Caco-2 (cell line): ENCODE measurements at regions of chrX and their contacts with region 1.

Region 1: GRCh38 chrX:47523297-47523696 is 37.7 kb upstream of the ARAF start:
- DNase-seq: peak; percentile 63 to 86
- H3K4me3 ChIP-seq: peak overlapping the region; percentile 52
- H3K4me3 Mint-ChIP-seq: peak overlapping the region; percentile 68
- H3K27ac Mint-ChIP-seq: no peak overlapping the region
- H3K4me1 ChIP-seq: no peaks in the 10 kb centered on the region
- H3K4me1 Mint-ChIP-seq: no peaks in the 10 kb centered on the region
- H3K27me3 ChIP-seq: no peaks in the 10 kb centered on the region
- H3K27me3 Mint-ChIP-seq: peaks cover 3% of the 10 kb centered on the region
- CTCF ChIP-seq: peak; percentile 71 to 75

Region 2: DNA sequence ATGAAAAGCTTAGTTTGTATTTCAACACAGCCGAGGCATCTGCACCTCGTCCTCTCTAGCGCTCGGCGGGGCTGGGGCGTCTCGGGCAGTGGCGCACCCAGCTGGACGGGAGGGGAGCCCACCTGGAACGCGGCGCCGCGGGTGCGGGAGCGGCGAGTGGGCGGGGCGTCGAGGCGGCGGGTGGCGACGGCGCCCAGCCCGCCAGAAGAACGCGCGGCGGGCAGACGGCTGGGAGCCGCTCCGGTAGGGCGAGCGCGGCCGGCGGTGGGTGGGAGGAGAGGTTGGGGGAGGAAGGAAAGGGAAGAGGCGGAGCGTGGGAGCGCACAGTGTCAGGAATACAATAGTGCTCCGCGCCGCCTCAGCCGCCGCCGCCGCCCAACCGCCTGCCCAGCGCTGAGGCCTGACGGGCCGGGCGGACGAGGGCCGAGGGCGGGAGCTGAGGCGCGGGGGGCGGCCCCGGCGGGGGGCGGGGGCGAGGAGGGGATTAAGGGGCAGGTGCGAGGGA is 611.1 kb before region 1 on chrX and contains the start of gene JADE3:
- CTCF ChIA-PET with region 1: no interaction called
- POLR2A ChIA-PET with region 1: no interaction called
- intact Hi-C with region 1: no loop called
- DNase-seq: peak; percentile 82 to 87
- H3K4me3 ChIP-seq: peak within 1 kb of the TSS; percentile 74
- H3K4me3 Mint-ChIP-seq: peak within 1 kb of the TSS; percentile 85
- H3K27ac Mint-ChIP-seq: peak within 1 kb of the TSS; percentile 85
- H3K4me1 ChIP-seq: no peaks in the 10 kb centered on the region
- H3K4me1 Mint-ChIP-seq: no peaks in the 10 kb centered on the region
- H3K27me3 ChIP-seq: no peaks in the 10 kb centered on the region
- H3K27me3 Mint-ChIP-seq: no peaks in the 10 kb centered on the region
- CTCF ChIP-seq: peak in 1 of 2 experiments; percentile 2
- total RNA-seq, gene JADE3: 21.7 and 22.7 TPM in 2 replicates

Region 3: GRCh38 chrX:47112316-47112954 is 410.9 kb before region 1 on chrX:
- CTCF ChIA-PET with region 1: interaction called, 11 read pairs
- POLR2A ChIA-PET with region 1: no interaction called
- intact Hi-C with region 1: no loop called
- DNase-seq: no peak
- H3K4me3 ChIP-seq: no peak overlapping the region
- H3K4me3 Mint-ChIP-seq: no peak overlapping the region
- H3K27ac Mint-ChIP-seq: no peak overlapping the region
- H3K4me1 ChIP-seq: no peaks in the 10 kb centered on the region
- H3K4me1 Mint-ChIP-seq: no peaks in the 10 kb centered on the region
- H3K27me3 ChIP-seq: no peaks in the 10 kb centered on the region
- H3K27me3 Mint-ChIP-seq: no peaks in the 10 kb centered on the region
- CTCF ChIP-seq: no peak

Region 4: GRCh38 chrX:47384502-47384901 is 138.8 kb before region 1 on chrX:
- CTCF ChIA-PET with region 1: no interaction called
- POLR2A ChIA-PET with region 1: no interaction called
- intact Hi-C with region 1: loop called (anchors 5 kb)
- DNase-seq: peak; percentile 40 to 59
- H3K4me3 ChIP-seq: no peak overlapping the region
- H3K4me3 Mint-ChIP-seq: no peak overlapping the region
- H3K27ac Mint-ChIP-seq: no peak overlapping the region
- H3K4me1 ChIP-seq: no peaks in the 10 kb centered on the region
- H3K4me1 Mint-ChIP-seq: no peaks in the 10 kb centered on the region
- H3K27me3 ChIP-seq: no peaks in the 10 kb centered on the region
- H3K27me3 Mint-ChIP-seq: no peaks in the 10 kb centered on the region
- CTCF ChIP-seq: peak; percentile 48 to 56

Region 5: DNA sequence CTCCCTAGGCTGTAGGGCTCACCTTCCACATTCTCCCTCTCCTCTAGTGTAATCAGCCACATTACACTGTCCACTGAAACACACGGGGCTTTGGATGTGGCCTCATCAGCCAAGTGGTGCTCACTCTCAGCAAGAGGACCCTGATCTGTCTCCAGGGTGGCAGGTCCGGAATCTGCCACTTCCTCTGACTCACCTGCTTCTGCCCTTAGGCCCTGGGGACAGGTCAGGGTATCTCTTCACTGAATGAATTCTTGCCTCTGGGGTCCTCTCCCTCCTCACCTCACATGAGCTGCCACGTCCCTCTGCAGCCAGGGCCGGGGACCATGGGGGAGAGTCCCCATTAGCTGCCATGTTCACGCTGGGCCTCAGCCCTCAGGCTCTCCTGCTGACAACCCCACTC is 56.2 kb before region 1 on chrX:
- CTCF ChIA-PET with region 1: no interaction called
- POLR2A ChIA-PET with region 1: no interaction called
- intact Hi-C with region 1: no loop called
- DNase-seq: no peak
- H3K4me3 ChIP-seq: no peak overlapping the region
- H3K4me3 Mint-ChIP-seq: no peak overlapping the region
- H3K27ac Mint-ChIP-seq: no peak overlapping the region
- H3K4me1 ChIP-seq: no peaks in the 10 kb centered on the region
- H3K4me1 Mint-ChIP-seq: no peaks in the 10 kb centered on the region
- H3K27me3 ChIP-seq: no peaks in the 10 kb centered on the region
- H3K27me3 Mint-ChIP-seq: no peaks in the 10 kb centered on the region
- CTCF ChIP-seq: no peak

Region 6: GRCh38 chrX:47482512-47483309 is 40.6 kb before region 1 on chrX and contains the start of gene ZNF41:
- CTCF ChIA-PET with region 1: no interaction called
- POLR2A ChIA-PET with region 1: no interaction called
- intact Hi-C with region 1: no loop called
- DNase-seq: peak; percentile 86 to 87
- H3K4me3 ChIP-seq: peak within 1 kb of the TSS; percentile 65
- H3K4me3 Mint-ChIP-seq: peak within 1 kb of the TSS; percentile 93
- H3K27ac Mint-ChIP-seq: peak within 1 kb of the TSS; percentile 61
- H3K4me1 ChIP-seq: no peaks in the 10 kb centered on the region
- H3K4me1 Mint-ChIP-seq: peaks cover 9% of the 10 kb centered on the region
- H3K27me3 ChIP-seq: no peaks in the 10 kb centered on the region
- H3K27me3 Mint-ChIP-seq: no peaks in the 10 kb centered on the region
- CTCF ChIP-seq: no peak
- total RNA-seq, gene ZNF41: 5.1 and 6.6 TPM in 2 replicates

Region 7: GRCh38 chrX:47497273-47497672 is 26.0 kb before region 1 on chrX:
- CTCF ChIA-PET with region 1: interaction called, 10 read pairs
- POLR2A ChIA-PET with region 1: no interaction called
- intact Hi-C with region 1: no loop called
- DNase-seq: no peak
- H3K4me3 ChIP-seq: no peak overlapping the region
- H3K4me3 Mint-ChIP-seq: no peak overlapping the region
- H3K27ac Mint-ChIP-seq: no peak overlapping the region
- H3K4me1 ChIP-seq: no peaks in the 10 kb centered on the region
- H3K4me1 Mint-ChIP-seq: no peaks in the 10 kb centered on the region
- H3K27me3 ChIP-seq: no peaks in the 10 kb centered on the region
- H3K27me3 Mint-ChIP-seq: no peaks in the 10 kb centered on the region
- CTCF ChIP-seq: peak in 1 of 2 experiments; percentile 42